GM12878 (cell line): ENCODE measurements at regions of chr18 and their contacts with region 1.

Region 1: DNA sequence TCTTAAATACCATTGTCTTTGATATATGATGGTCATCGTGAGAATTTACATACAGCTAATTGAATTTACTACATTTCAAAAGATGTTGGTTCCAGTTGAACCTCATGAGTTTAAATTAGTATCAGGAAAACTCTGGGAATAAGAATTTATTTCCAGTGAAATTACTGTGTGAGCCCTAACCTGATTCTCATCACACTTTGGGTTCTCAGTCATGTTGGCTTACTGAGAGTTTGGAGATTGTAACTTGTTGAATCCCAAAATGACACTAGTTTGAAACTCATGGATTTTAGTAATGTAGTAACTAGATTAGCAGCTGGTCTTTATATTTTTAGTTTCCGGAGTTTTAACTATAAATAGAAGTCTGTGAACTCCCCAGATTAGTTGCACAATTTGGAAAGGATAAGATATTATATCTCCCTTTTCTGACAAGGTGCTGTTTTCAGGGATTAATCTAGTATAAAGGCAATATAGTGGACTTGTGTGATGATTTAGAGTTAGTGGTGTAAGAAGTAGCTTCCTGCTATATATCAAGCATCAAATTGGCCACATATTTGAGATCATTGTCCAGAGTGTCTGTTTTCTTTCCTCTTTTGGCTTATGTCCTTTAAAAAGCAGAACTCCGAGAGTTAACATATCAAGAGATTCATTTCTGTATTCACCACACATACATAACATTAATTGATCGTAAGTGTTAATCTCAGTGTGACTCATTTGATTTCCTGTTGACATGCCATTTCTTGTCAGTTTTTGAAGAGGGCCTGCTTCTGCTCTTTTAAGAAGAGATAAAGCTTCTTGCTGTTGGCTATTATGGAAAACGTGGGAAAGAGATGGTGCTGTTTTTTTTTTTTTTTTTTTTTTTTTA is 15.7 kb downstream of the NDUFV2 start:
- DNase-seq: no peak
- ATAC-seq: peak; percentile 48
- H3K4me3 ChIP-seq: peak overlapping the region; percentile 25
- H3K27ac ChIP-seq: peak overlapping the region; percentile 89
- H3K4me1 ChIP-seq: peaks cover 38% of the 10 kb centered on the region
- H3K27me3 ChIP-seq: no peaks in the 10 kb centered on the region
- CTCF ChIP-seq: no peak
- EP300 ChIP-seq: peak in 1 of 2 experiments; percentile 54; a peak in 1 of 4 replicates
- POLR2A ChIP-seq: no peak
- RAD21 ChIP-seq: no peak

Region 2: DNA sequence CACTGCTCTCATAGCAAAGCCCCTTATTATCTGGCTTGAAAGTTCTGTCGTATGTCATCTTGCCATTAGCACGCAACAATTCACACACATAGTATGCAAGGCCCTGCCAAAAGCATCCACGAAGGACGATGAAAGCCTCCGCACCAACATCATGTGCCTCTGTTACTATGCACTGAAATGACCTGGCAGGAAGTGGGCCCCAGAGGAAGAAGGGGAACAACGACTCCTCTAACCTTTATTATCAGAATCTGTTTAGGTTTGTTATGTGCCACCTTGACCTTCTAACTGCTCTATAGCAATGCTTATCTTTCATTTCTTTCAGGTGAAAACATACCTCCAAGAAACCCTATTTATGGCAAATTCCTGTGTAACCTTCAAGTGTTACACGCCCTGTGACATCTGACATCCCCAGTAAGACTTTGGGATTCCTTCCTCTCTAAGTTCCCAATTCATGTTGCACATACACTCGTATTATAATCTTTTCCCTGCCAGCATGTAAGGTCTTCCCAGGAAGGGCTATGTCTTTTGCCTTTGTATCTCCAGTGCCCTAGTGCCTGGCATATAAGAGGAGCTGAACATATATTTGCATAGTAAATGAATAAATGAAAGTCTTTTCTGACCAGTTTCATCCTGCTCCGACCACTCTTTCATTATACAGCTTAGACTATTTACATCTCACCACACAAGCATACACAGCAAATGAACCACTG is 22.8 kb before region 1 on chr18:
- CTCF ChIA-PET with region 1: interaction called, 3 read pairs
- POLR2A ChIA-PET with region 1: interaction called, 4 read pairs
- RAD21 ChIA-PET with region 1: interaction called, 3 read pairs
- SMC1A ChIA-PET with region 1: interaction called, 10 read pairs
- in situ Hi-C with region 1: no loop called
- intact Hi-C with region 1: no loop called
- DNase-seq: peak; percentile 63
- ATAC-seq: peak; percentile 92
- H3K4me3 ChIP-seq: peak overlapping the region; percentile 24; the same call in 1 of the 2 replicates
- H3K27ac ChIP-seq: peak overlapping the region; percentile 95
- H3K4me1 ChIP-seq: peaks cover 19% of the 10 kb centered on the region
- H3K27me3 ChIP-seq: no peaks in the 10 kb centered on the region
- CTCF ChIP-seq: no peak
- EP300 ChIP-seq: peak; percentile 20 to 55; a peak in 3 of 4 replicates
- POLR2A ChIP-seq: peak; percentile 70
- RAD21 ChIP-seq: no peak

Region 3: GRCh38 chr18:9102508-9103375 is 15.5 kb before region 1 on chr18 and contains the start of gene NDUFV2:
- CTCF ChIA-PET with region 1: interaction called, 8 read pairs
- POLR2A ChIA-PET with region 1: interaction called, 42 read pairs
- RAD21 ChIA-PET with region 1: interaction called, 22 read pairs
- SMC1A ChIA-PET with region 1: interaction called, 43 read pairs
- in situ Hi-C with region 1: no loop called
- intact Hi-C with region 1: loop called (anchors 1 kb)
- DNase-seq: peak; percentile 77
- ATAC-seq: peak; percentile 93
- H3K4me3 ChIP-seq: peak within 1 kb of the TSS; percentile 87
- H3K27ac ChIP-seq: peak within 1 kb of the TSS; percentile 85
- H3K4me1 ChIP-seq: peaks cover 5% of the 10 kb centered on the region
- H3K27me3 ChIP-seq: no peaks in the 10 kb centered on the region
- CTCF ChIP-seq: no peak
- EP300 ChIP-seq: no peak
- POLR2A ChIP-seq: peak; percentile 87
- RAD21 ChIP-seq: no peak
- polyA plus RNA-seq, gene NDUFV2: 409 to 471 TPM

Region 4: GRCh38 chr18:9217743-9218451 is 99.7 kb after region 1 on chr18:
- CTCF ChIA-PET with region 1: no interaction called
- POLR2A ChIA-PET with region 1: no interaction called
- RAD21 ChIA-PET with region 1: no interaction called
- SMC1A ChIA-PET with region 1: no interaction called
- in situ Hi-C with region 1: no loop called
- intact Hi-C with region 1: no loop called
- DNase-seq: no peak
- ATAC-seq: no peak
- H3K4me3 ChIP-seq: no peak overlapping the region
- H3K27ac ChIP-seq: no peak overlapping the region
- H3K4me1 ChIP-seq: no peaks in the 10 kb centered on the region
- H3K27me3 ChIP-seq: no peaks in the 10 kb centered on the region
- CTCF ChIP-seq: no peak
- EP300 ChIP-seq: no peak
- POLR2A ChIP-seq: no peak
- RAD21 ChIP-seq: no peak